HCT116 (cell line): ENCODE measurements at regions of chr4 and their contacts with region 1.

Region 1: DNA sequence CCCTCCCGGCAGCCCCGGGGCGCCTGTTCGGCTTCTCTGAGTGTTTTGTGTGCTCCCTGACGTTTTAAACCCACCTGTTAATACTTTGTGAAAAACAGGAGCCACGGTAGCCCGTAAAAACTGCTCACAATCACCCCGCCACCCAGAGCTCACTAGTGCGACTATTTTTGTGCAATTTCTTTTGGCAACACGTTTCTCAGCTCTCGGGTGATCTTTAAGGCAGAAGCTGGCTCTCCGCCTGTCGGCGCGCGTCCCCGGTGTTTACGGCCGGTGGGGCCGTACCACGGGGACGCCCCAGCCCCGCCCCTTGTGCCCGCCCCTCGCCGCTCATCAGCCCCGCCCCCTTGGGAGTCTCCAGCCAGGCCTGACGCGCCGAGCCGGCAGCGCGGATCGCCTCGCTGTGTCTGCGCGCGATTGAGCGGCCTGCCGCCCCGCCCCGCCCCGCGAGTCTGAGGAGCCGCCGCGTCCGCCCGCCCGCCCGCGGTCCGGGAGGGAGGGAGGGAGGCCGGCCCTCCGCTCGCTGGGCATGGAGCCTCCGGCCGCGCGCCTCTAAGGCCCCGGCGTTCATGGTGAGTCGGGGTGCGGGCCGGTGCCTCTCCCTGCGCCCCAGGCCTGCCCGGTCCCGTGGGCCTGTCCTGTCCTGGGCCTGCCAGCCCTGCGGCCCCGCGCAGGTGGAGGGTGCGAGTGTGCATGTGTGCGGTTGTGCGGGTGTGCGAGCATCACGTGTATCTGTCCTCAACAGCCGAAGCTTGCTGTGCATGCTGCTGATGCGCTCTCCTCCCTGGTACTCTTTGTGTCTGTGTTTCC is 56.2 kb upstream of the TADA2B start:
- DNase-seq: peak; percentile 71
- ATAC-seq: peak; percentile 91
- H3K4me3 ChIP-seq: peak overlapping the region; percentile 84 to 90
- H3K27ac ChIP-seq: peak overlapping the region; percentile 72
- H3K4me1 ChIP-seq: peaks cover 15 to 36% of the 10 kb centered on the region in 2 experiments; a peak in 2 of 4 replicates
- H3K27me3 ChIP-seq: no peaks in the 10 kb centered on the region
- CTCF ChIP-seq: no peak
- POLR2A ChIP-seq: no peak
- RAD21 ChIP-seq: no peak

Region 2: DNA sequence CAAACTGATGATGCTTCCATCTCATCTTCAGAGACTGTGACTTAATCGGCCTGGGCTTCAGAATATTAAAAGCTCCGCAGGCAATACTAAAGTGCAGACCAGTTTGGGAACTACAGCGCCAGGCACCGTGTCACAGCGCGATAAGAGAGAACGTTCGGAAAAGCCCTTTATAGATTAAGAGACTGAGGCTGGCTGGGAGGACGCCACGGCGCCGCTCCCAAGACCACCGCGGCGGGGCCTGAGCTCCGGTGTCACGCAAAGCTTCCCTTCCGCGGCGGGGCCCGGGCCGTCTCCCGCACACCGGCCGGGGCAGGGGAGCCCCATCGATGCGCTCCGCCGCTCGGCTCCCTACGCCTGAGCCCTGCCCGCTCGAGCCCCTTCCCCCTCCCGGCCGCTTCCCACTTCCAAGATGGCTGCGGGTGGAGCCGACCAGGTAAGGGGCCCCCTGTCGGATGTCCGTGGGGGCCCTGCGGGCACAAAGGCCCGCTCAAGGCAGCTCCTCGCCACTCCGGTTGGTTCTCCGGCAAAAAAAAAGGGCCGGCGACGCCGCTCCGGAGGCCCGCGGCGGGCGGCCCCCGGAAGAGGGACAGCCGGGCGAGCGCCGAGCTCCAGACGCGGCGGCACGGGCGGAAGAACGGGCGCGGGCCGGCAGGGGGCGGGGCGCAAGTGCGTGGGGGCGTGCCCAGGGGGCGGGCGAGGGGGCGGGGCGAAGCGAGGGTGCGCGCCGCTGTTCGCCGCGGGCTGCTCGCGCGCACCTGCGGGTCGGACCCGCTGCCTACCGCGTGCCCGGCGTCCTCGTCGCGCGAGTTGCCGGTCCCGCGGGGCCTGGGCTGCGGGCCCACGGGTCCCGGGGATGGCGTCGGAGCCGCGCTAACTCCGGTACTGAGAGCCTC is 77.7 kb before region 1 on chr4 and contains the start of gene TBC1D14:
- CTCF ChIA-PET with region 1: no interaction called
- POLR2A ChIA-PET with region 1: no interaction called
- RAD21 ChIA-PET with region 1: interaction called in 1 of 2 experiments, 3 read pairs
- intact Hi-C with region 1: loop called (anchors 5 kb)
- DNase-seq: peak; percentile 68
- ATAC-seq: peak; percentile 87
- H3K4me3 ChIP-seq: peak within 1 kb of the TSS; percentile 72 to 88
- H3K27ac ChIP-seq: peak within 1 kb of the TSS; percentile 95
- H3K4me1 ChIP-seq: peaks cover 11 to 35% of the 10 kb centered on the region in 2 experiments
- H3K27me3 ChIP-seq: no peaks in the 10 kb centered on the region
- CTCF ChIP-seq: peak in 1 of 3 experiments; percentile 20; a peak in 1 of 6 replicates
- POLR2A ChIP-seq: peak; percentile 37
- RAD21 ChIP-seq: no peak
- total RNA-seq, gene TBC1D14: 62.9 TPM

Region 3: GRCh38 chr4:6942238-6942800 is 44.7 kb before region 1 on chr4:
- CTCF ChIA-PET with region 1: no interaction called
- POLR2A ChIA-PET with region 1: no interaction called
- RAD21 ChIA-PET with region 1: no interaction called
- intact Hi-C with region 1: no loop called
- DNase-seq: peak; percentile 32
- ATAC-seq: peak; percentile 69
- H3K4me3 ChIP-seq: peak overlapping the region; percentile 30 to 49
- H3K27ac ChIP-seq: peak overlapping the region; percentile 80
- H3K4me1 ChIP-seq: peaks cover 31 to 38% of the 10 kb centered on the region in 2 experiments
- H3K27me3 ChIP-seq: no peaks in the 10 kb centered on the region
- CTCF ChIP-seq: no peak
- POLR2A ChIP-seq: no peak
- RAD21 ChIP-seq: no peak; the same call in 1 of the 2 replicates

Region 4: GRCh38 chr4:6999172-7000055 is 12.4 kb after region 1 on chr4:
- CTCF ChIA-PET with region 1: no interaction called
- POLR2A ChIA-PET with region 1: interaction called, 11 read pairs
- RAD21 ChIA-PET with region 1: no interaction called
- intact Hi-C with region 1: no loop called
- DNase-seq: peak; percentile 78
- ATAC-seq: peak; percentile 91
- H3K4me3 ChIP-seq: peak overlapping the region in 1 of 2 experiments; percentile 37; a peak in 3 of 4 replicates
- H3K27ac ChIP-seq: peak overlapping the region; percentile 57
- H3K4me1 ChIP-seq: peaks cover 17 to 35% of the 10 kb centered on the region in 2 experiments
- H3K27me3 ChIP-seq: no peaks in the 10 kb centered on the region
- CTCF ChIP-seq: no peak
- POLR2A ChIP-seq: no peak
- RAD21 ChIP-seq: no peak

Region 5: GRCh38 chr4:7108660-7109059 is 121.7 kb after region 1 on chr4:
- CTCF ChIA-PET with region 1: no interaction called
- POLR2A ChIA-PET with region 1: no interaction called
- RAD21 ChIA-PET with region 1: no interaction called
- intact Hi-C with region 1: no loop called
- DNase-seq: no peak
- ATAC-seq: no peak
- H3K4me3 ChIP-seq: no peak overlapping the region
- H3K27ac ChIP-seq: no peak overlapping the region
- H3K4me1 ChIP-seq: peaks cover 2 to 3% of the 10 kb centered on the region in 2 experiments
- H3K27me3 ChIP-seq: no peaks in the 10 kb centered on the region
- CTCF ChIP-seq: no peak
- POLR2A ChIP-seq: no peak
- RAD21 ChIP-seq: no peak

Region 6: GRCh38 chr4:7649741-7650531 is 663.0 kb after region 1 on chr4:
- CTCF ChIA-PET with region 1: no interaction called
- POLR2A ChIA-PET with region 1: no interaction called
- RAD21 ChIA-PET with region 1: no interaction called
- intact Hi-C with region 1: no loop called
- DNase-seq: peak; percentile 7
- ATAC-seq: peak; percentile 61
- H3K4me3 ChIP-seq: no peak overlapping the region
- H3K27ac ChIP-seq: no peak overlapping the region
- H3K4me1 ChIP-seq: peaks cover 0 to 32% of the 10 kb centered on the region in 2 experiments; a peak in 3 of 4 replicates
- H3K27me3 ChIP-seq: no peaks in the 10 kb centered on the region
- CTCF ChIP-seq: no peak
- POLR2A ChIP-seq: no peak
- RAD21 ChIP-seq: no peak